ENCODE measurements at regions of chr3 and their contacts with region 1.

Region 1: GRCh38 chr3:11236595-11237461 is 35.4 kb upstream of the ATG7 start:
- DNase-seq: peak; percentile 90
- ATAC-seq: no peak
- H3K4me3 Mint-ChIP-seq: no peak overlapping the region
- H3K27ac Mint-ChIP-seq: no peak overlapping the region
- H3K4me1 Mint-ChIP-seq: peaks cover 46% of the 10 kb centered on the region
- H3K27me3 Mint-ChIP-seq: peaks cover 23% of the 10 kb centered on the region

Region 2: DNA sequence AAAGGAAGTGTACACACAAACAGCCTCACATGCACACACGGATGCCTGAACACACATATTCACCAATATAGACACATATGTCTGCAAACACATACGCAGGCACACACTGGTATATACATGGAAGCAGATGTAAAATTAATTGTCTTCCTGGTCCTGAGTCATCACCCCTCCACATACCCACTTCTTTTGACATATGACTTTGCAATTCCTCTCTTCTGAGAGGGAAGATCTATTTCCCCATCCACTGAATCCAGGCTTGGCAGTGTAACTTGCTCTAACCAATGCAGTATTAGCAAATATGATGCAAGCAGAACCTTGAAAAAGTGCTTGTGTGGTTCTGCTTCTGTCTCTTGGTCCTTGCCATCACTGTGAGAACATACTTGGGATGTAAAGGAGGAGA is 159.4 kb before region 1 on chr3:
- CTCF ChIA-PET with region 1: no interaction called
- POLR2A ChIA-PET with region 1: no interaction called
- intact Hi-C with region 1: no loop called
- DNase-seq: no peak
- ATAC-seq: no peak
- H3K4me3 Mint-ChIP-seq: no peak overlapping the region
- H3K27ac Mint-ChIP-seq: no peak overlapping the region
- H3K4me1 Mint-ChIP-seq: no peaks in the 10 kb centered on the region
- H3K27me3 Mint-ChIP-seq: peaks cover 25% of the 10 kb centered on the region

Region 3: GRCh38 chr3:11096266-11097135 is 140.3 kb before region 1 on chr3:
- CTCF ChIA-PET with region 1: no interaction called
- POLR2A ChIA-PET with region 1: no interaction called
- intact Hi-C with region 1: loop called in 1 of 2 experiments (anchors 1 kb)
- DNase-seq: peak; percentile 91
- ATAC-seq: peak; percentile 95
- H3K4me3 Mint-ChIP-seq: peak overlapping the region; percentile 61
- H3K27ac Mint-ChIP-seq: peak overlapping the region; percentile 60
- H3K4me1 Mint-ChIP-seq: peaks cover 18% of the 10 kb centered on the region
- H3K27me3 Mint-ChIP-seq: peaks cover 16% of the 10 kb centered on the region

Region 4: DNA sequence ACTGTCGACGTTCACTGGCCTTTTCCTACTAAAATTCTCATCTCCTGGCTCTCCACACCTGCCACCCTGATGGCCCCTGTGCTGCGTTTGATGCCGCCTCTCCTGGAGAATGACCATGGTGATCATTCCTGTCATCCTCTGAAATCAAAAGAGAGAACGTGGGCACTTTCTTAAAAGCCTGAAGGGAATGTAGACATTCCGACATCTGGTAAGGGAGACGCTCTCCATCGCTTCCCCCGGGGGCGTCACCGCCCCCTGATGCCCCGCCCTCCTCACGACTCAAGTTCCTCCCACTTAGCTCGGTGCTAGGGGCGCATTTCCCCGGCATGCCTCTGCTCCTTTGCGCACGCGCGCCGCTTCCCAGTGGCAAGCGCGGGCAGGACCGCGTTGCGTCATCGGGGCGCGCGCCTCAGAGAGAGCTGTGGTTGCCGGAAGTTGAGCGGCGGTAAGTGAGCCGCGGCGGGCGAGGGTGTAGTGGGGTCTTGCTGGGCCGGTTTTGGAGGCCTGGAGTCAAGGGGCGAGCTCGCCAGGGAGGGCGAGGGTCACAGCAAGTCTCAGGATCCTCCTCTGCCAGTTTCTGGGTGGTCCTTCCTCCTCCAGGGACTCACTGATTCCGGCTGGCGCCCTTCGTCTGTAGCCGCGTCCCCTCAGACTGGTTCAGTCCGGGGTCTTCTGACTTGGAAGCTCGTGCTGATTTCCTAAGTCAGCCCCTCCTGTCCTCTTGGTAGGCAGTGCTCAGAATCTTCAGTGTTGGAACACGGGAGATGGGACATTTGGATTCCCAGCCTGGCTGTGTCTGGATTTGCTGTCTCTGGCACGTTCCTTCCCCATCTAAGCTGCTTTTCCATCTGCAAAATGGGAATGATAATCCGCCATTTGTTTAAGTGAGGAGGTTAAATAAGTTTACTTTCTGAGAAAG is 35.4 kb after region 1 on chr3 and contains the start of gene ATG7:
- CTCF ChIA-PET with region 1: interaction called, 6 read pairs
- POLR2A ChIA-PET with region 1: interaction called, 12 read pairs
- intact Hi-C with region 1: loop called (anchors 1 kb)
- DNase-seq: peak; percentile 98
- ATAC-seq: peak; percentile 97
- H3K4me3 Mint-ChIP-seq: peak within 1 kb of the TSS; percentile 93
- H3K27ac Mint-ChIP-seq: peak within 1 kb of the TSS; percentile 94
- H3K4me1 Mint-ChIP-seq: peaks cover 45% of the 10 kb centered on the region
- H3K27me3 Mint-ChIP-seq: no peaks in the 10 kb centered on the region
- total RNA-seq, gene ATG7: 31.6 to 34.5 TPM

Region 5: GRCh38 chr3:11335056-11335608 is 98.3 kb after region 1 on chr3:
- CTCF ChIA-PET with region 1: interaction called, 46 read pairs
- POLR2A ChIA-PET with region 1: interaction called, 3 read pairs
- intact Hi-C with region 1: loop called (anchors 1 kb)
- DNase-seq: no peak
- ATAC-seq: peak; percentile 81
- H3K4me3 Mint-ChIP-seq: no peak overlapping the region
- H3K27ac Mint-ChIP-seq: no peak overlapping the region
- H3K4me1 Mint-ChIP-seq: peaks cover 7% of the 10 kb centered on the region
- H3K27me3 Mint-ChIP-seq: no peaks in the 10 kb centered on the region

Region 6: GRCh38 chr3:11643605-11644087 is 406.8 kb after region 1 on chr3 and contains the start of gene VGLL4:
- CTCF ChIA-PET with region 1: interaction called, 3 read pairs
- POLR2A ChIA-PET with region 1: no interaction called
- intact Hi-C with region 1: loop called (anchors 5 kb)
- DNase-seq: peak; percentile 85
- ATAC-seq: peak; percentile 74
- H3K4me3 Mint-ChIP-seq: peak within 1 kb of the TSS; percentile 99
- H3K27ac Mint-ChIP-seq: peak within 1 kb of the TSS; percentile 99
- H3K4me1 Mint-ChIP-seq: peaks cover 33% of the 10 kb centered on the region
- H3K27me3 Mint-ChIP-seq: no peaks in the 10 kb centered on the region
- total RNA-seq, gene VGLL4: 24.4 to 24.9 TPM